Naive thymus-derived CD4-positive, alpha-beta T cell (primary cell): ENCODE measurements at regions of chr9 and their contacts with region 1.

Region 1: GRCh38 chr9:97906236-97906831 is 16.0 kb downstream of the TRMO start:
- DNase-seq: peak in 7 of 9 donors; percentile 68 to 89 (median 79)
- ATAC-seq: peak; percentile 58
- H3K4me3 ChIP-seq: peak overlapping the region; percentile 51
- H3K4me3 Mint-ChIP-seq: peak overlapping the region; percentile 80 to 98 (median 92)
- H3K27ac ChIP-seq: peak overlapping the region; percentile 95
- H3K27ac Mint-ChIP-seq: peak overlapping the region; percentile 92 to 100 (median 98)
- H3K4me1 ChIP-seq: peaks cover 74 to 79% of the 10 kb centered on the region in 2 donors
- H3K4me1 Mint-ChIP-seq: peaks cover 61 to 94% (median 87%) of the 10 kb centered on the region in 7 donors
- H3K27me3 ChIP-seq: no peaks in the 10 kb centered on the region
- H3K27me3 Mint-ChIP-seq: no peaks in the 10 kb centered on the region

Region 2: DNA sequence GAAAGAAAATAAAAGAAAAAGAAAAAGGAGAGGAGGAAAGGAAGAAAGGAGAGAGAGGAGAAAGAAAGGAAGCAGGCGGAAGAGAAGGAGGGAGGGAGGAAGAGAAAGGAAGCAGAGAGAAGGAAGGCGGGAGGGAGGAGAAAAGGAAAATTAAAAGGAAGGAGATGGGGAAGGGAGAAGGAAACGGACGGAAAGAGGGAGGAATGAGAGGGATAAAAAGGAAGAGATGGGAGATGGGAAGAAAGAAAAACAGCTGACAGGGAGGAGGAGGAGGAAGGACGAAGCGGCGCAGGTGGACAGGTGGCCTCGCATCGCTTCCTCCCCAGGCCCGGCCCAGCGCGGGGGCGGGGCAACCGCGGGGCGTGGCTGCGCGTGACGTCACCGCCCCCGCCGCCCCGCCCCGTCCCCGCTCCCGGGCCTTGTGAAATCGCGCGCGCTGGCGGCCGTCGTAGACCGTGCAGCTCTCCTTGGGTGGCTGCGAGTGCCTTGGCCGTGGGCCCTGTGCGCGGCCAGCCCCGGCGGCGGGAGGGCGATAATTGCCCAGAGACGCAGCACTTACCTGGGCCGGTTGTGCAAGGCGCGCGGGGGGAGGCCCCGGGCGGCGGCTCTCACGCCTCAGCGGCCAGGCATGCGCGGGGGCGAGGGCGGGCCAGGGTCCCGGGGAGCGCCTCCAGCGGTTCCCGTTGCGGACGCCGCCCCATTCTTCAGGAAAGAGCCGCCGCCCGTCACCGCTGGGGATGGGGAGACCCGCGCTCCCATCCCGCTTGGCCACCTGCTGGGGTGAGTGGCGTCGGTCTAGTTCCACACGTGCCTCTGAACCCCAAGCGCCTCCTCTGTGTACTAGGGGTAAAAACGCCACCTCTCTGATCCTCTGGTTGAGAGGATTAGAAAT is 102.9 kb before region 1 on chr9:
- CTCF ChIA-PET with region 1: no interaction called
- POLR2A ChIA-PET with region 1: no interaction called
- intact Hi-C with region 1: loop called (anchors 2 to 5 kb)
- DNase-seq: peak; percentile 59 to 77 (median 75)
- ATAC-seq: peak; percentile 98
- H3K4me3 ChIP-seq: peak overlapping the region; percentile 72
- H3K4me3 Mint-ChIP-seq: peak overlapping the region; percentile 78 to 92 (median 87)
- H3K27ac ChIP-seq: peak overlapping the region; percentile 45
- H3K27ac Mint-ChIP-seq: peak overlapping the region in 7 of 9 donors; percentile 28 to 86 (median 80)
- H3K4me1 ChIP-seq: no peaks in the 10 kb centered on the region
- H3K4me1 Mint-ChIP-seq: peaks cover 0 to 13% (median 9%) of the 10 kb centered on the region in 7 donors
- H3K27me3 ChIP-seq: no peaks in the 10 kb centered on the region
- H3K27me3 Mint-ChIP-seq: peaks cover 4 to 51% (median 17%) of the 10 kb centered on the region in 5 donors

Region 3: DNA sequence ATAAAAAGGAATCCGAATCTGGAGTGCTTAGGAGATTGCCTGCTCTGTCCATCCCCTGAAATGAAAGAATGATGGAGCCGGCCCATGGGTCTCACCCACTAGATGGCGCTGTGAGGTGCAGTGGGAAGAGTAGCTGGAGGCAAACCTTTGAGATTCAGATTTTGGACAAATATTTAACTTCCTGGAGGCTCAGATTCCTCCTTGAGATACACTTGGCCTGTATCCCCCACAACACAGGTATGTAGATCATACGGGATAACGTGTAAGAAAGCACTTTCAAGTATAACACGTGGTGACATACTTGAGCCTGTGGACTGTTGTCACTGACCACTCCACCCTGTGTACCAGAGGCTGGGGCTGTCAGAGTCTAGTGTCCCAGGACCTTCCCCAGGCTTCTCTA is 16.3 kb before region 1 on chr9:
- CTCF ChIA-PET with region 1: interaction called, 131 read pairs
- POLR2A ChIA-PET with region 1: interaction called, 715 read pairs
- intact Hi-C with region 1: loop called in 1 of 2 experiments (anchors 1 kb)
- DNase-seq: peak; percentile 40 to 73 (median 57)
- ATAC-seq: peak; percentile 88
- H3K4me3 ChIP-seq: no peak overlapping the region
- H3K4me3 Mint-ChIP-seq: peak overlapping the region in 1 of 10 donors; percentile 51
- H3K27ac ChIP-seq: no peak overlapping the region
- H3K27ac Mint-ChIP-seq: peak overlapping the region in 5 of 9 donors; percentile 28 to 81 (median 68)
- H3K4me1 ChIP-seq: peaks cover 0 to 4% of the 10 kb centered on the region in 2 donors
- H3K4me1 Mint-ChIP-seq: peaks cover 6 to 23% (median 18%) of the 10 kb centered on the region in 7 donors
- H3K27me3 ChIP-seq: no peaks in the 10 kb centered on the region
- H3K27me3 Mint-ChIP-seq: no peaks in the 10 kb centered on the region

Region 4: DNA sequence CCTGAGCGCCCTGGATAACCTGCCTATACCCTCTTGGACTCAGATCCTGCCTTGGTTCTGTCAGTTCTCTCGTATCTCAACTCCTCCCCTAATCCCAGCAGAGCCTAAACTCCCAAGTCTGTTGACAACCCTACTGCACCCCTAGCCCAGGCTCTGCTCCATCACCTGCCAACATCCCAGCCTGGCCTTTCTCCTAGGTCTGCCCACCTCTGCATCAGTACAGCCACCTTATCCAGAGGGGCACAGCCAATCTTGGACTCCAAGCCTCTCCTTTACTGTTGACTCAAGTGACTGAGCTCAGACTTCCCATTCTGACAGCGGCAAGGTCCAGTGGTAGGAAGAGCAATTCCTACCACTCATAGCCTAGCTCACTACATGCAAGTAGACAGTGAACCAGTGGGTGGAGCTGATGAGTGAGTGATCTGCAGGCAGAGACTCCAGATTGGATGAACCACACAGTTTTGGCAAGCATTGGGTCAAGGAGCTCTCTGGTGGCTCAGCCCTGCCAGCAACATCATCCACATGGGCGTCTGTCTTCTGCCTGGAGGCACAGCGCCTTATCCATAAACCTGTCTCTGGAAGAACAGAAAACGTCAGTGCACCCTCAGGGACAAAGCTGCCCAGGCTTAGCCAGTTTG is 10.5 kb before region 1 on chr9:
- CTCF ChIA-PET with region 1: interaction called, 131 read pairs
- POLR2A ChIA-PET with region 1: interaction called, 715 read pairs
- intact Hi-C with region 1: loop called in 1 of 2 experiments (anchors 1 kb)
- DNase-seq: no peak
- ATAC-seq: peak; percentile 80
- H3K4me3 ChIP-seq: no peak overlapping the region
- H3K4me3 Mint-ChIP-seq: no peak overlapping the region
- H3K27ac ChIP-seq: no peak overlapping the region
- H3K27ac Mint-ChIP-seq: peak overlapping the region in 8 of 9 donors; percentile 7 to 84 (median 70)
- H3K4me1 ChIP-seq: peaks cover 6 to 15% of the 10 kb centered on the region in 2 donors
- H3K4me1 Mint-ChIP-seq: peaks cover 7 to 45% (median 37%) of the 10 kb centered on the region in 7 donors
- H3K27me3 ChIP-seq: no peaks in the 10 kb centered on the region
- H3K27me3 Mint-ChIP-seq: no peaks in the 10 kb centered on the region

Region 5: DNA sequence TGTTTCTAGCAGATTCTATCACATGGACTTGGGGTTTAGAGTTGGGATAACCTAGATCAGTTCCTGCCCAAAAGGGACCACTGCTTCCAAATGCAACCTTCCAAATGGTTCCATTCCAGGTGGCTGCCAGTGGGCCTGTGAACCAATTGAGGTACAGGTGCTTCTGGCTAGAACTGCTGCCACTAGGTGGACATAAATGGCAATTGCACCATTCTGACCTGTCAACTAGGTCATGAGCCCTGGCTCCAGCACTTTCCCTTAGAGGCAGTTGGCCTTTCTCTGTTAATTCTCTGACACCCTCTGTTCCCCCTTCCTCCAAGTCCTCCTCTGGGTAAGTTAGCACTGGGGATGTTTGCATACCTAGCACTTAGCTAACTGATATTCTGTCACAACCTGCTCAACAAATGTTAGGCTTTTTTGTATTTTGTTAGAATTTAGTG is 48.2 kb after region 1 on chr9:
- CTCF ChIA-PET with region 1: interaction called, 13 read pairs
- POLR2A ChIA-PET with region 1: no interaction called
- intact Hi-C with region 1: no loop called
- DNase-seq: peak in 8 of 9 donors; percentile 34 to 69 (median 60)
- ATAC-seq: peak; percentile 90
- H3K4me3 ChIP-seq: no peak overlapping the region
- H3K4me3 Mint-ChIP-seq: no peak overlapping the region
- H3K27ac ChIP-seq: no peak overlapping the region
- H3K27ac Mint-ChIP-seq: peak overlapping the region in 4 of 9 donors; percentile 14 to 78 (median 44)
- H3K4me1 ChIP-seq: peaks cover 0 to 10% of the 10 kb centered on the region in 2 donors
- H3K4me1 Mint-ChIP-seq: peaks cover 0 to 13% (median 9%) of the 10 kb centered on the region in 7 donors
- H3K27me3 ChIP-seq: no peaks in the 10 kb centered on the region
- H3K27me3 Mint-ChIP-seq: peaks cover 0 to 18% (median 0%) of the 10 kb centered on the region in 5 donors

Region 6: GRCh38 chr9:98101868-98102273 is 195.5 kb after region 1 on chr9:
- CTCF ChIA-PET with region 1: interaction called, 5 read pairs
- POLR2A ChIA-PET with region 1: interaction called, 3 read pairs
- intact Hi-C with region 1: loop called in 1 of 2 experiments (anchors 2 kb)
- DNase-seq: peak; percentile 35 to 96 (median 92)
- ATAC-seq: peak; percentile 99
- H3K4me3 ChIP-seq: peak overlapping the region; percentile 31
- H3K4me3 Mint-ChIP-seq: peak overlapping the region; percentile 66 to 86 (median 77)
- H3K27ac ChIP-seq: peak overlapping the region; percentile 78
- H3K27ac Mint-ChIP-seq: peak overlapping the region; percentile 87 to 99 (median 95)
- H3K4me1 ChIP-seq: peaks cover 88 to 91% of the 10 kb centered on the region in 2 donors
- H3K4me1 Mint-ChIP-seq: peaks cover 52 to 97% (median 88%) of the 10 kb centered on the region in 7 donors
- H3K27me3 ChIP-seq: no peaks in the 10 kb centered on the region
- H3K27me3 Mint-ChIP-seq: no peaks in the 10 kb centered on the region

Region 7: DNA sequence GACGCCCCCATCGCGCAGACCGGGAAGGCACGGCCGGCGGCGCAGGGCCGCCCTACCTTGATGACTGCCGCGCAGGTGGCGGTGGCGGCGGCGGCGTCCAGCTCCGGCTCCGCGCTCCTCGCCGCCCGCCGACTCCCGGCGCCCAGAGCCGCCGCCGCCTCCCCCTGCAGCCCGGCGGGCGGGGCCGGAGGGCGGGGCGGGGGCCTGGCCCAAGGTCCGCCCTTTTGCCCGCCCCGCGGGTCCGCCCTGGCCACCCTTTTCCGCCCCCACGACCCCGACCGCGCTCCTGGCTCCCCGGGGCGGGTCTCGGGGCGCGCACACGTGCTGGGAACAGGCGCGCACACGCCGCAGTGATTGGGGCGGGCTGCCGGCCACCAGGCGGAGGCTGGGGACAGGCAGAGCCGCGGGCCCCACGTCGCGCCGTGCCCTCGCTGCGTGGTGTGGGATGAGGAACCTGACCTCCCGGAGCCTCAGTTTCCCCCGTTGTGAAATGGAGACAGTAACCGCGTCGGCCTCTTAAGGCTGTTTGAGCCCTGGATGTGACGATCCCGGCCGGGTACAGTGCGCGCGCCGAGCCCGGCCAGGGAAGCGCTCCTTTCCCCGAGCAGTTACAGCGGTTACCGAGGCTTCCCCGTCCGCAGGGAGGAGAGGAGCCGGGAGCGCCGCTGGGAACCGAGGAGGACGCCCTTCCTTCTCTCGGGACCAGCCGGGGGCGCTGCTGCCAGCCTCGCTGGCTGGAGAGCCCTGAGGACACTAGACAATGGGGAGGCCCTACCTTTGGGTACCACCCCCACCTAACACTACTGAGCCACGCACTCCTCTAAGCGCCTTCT is 286.4 kb after region 1 on chr9 and contains the start of gene CORO2A:
- CTCF ChIA-PET with region 1: no interaction called
- POLR2A ChIA-PET with region 1: no interaction called
- intact Hi-C with region 1: loop called in 1 of 2 experiments (anchors 5 kb)
- DNase-seq: peak; percentile 37 to 85 (median 47)
- ATAC-seq: peak; percentile 86
- H3K4me3 ChIP-seq: peak within 1 kb of the TSS; percentile 81
- H3K4me3 Mint-ChIP-seq: peak within 1 kb of the TSS; percentile 76 to 92 (median 86)
- H3K27ac ChIP-seq: peak within 1 kb of the TSS; percentile 53
- H3K27ac Mint-ChIP-seq: peak within 1 kb of the TSS; percentile 19 to 90 (median 83)
- H3K4me1 ChIP-seq: peaks cover 17 to 22% of the 10 kb centered on the region in 2 donors
- H3K4me1 Mint-ChIP-seq: peaks cover 12 to 46% (median 41%) of the 10 kb centered on the region in 7 donors
- H3K27me3 ChIP-seq: no peaks in the 10 kb centered on the region
- H3K27me3 Mint-ChIP-seq: peaks cover 0 to 17% (median 0%) of the 10 kb centered on the region in 5 donors
- total RNA-seq, gene CORO2A: 3.0 to 9.7 (median 7.7) TPM